Posterior vena cava (tissue), 2 donors: ENCODE measurements at regions of chr4 and their contacts with region 1.

Region 1: GRCh38 chr4:14621731-14622463 is 380.4 kb upstream of the CPEB2 start:
- DNase-seq: no peak

Region 2: DNA sequence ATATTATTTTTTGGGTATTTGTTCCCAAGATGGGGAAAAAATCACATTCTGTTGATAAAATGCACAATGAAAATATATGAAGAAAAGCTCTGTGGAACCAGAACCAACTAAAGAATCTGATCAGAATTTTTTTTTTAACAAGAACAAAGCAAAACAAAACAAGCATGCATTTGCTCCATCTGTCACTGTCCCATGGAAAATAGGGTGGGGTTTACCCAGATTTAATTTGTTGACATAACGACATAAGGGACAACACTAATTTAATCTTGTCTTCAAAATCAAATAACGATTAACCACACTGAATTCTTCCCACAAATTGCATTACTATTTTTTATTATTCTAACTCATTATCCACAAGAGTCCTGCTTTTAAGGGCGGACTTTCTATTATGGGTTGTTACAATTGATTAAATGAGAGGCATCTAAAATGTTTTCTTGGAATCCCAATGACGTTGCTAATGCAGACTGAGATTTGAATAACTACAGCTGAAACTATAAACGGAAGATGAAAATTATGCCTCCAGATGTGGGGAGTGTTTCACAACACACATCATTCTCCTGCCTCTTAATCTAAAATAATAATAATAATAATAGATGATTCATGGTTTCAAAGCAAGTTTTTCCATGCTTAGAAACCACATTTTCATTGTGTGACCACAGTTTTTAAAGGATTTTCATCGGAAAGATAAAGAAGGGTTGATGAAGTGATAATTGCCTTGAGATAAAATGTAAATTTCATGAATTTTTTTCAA is 73.4 kb after region 1 on chr4:
- intact Hi-C with region 1: loop called in 1 of 2 experiments (anchors 2 kb)
- DNase-seq: no peak